Left colon (tissue), 2 donors: ENCODE measurements at regions of chr22 and their contacts with region 1.

Region 1: GRCh38 chr22:24170248-24170630 is 11.0 kb upstream of the SUSD2 start:
- DNase-seq: no peak
- ATAC-seq: peak; percentile 10

Region 2: DNA sequence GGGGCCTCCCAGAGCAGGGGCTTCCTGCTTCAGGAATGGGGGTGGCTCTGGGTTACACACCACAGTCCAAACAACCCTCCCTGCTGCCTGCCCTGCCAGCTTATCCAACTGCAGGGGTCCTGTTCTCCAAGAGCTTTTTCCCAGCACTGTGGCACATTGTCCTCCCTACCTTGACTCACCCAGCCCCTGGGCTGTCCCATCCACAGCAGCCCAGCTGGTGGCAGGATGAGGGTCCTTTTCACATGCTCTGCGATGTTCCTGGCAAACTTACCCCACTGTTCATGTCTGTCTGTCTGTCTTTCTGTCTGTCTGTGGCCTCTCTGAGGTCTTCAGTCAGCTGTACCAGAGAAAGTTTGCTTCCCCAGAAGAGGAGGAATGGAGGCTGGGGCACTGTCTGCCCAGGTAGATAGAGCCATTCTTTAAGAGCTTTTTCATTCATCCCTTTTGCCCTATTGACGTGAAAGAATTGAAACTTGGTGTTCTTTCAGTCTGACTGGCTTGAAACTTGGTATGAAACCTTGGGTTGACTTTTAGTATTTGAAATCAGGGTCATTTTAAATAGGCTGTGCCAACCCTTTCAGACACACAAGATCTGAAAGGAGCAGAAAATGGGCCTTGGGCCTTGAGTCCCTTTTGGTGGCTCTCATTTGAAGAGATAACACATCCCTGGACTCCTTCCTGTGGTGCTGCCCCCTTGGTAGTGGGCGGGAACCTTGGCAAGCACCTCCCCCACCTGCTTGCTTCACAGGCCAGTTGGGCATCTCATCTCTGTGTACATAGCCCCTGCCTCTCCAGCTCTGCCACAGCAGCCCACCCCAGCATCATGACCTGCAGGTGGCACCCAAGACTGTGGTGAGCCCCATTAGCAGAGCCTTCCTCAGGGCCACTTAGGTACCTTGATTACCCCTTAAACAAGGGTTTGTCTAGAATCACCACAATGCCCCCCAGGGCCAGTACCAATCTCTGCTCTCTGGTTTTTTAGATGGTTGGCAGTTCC is 63.6 kb before region 1 on chr22:
- intact Hi-C with region 1: loop called in 1 of 2 experiments (anchors 5 kb)
- DNase-seq: peak in 1 of 2 donors; percentile 30
- ATAC-seq: no peak

Region 3: GRCh38 chr22:24244101-24244787 is 74.0 kb after region 1 on chr22:
- intact Hi-C with region 1: no loop called
- DNase-seq: peak in 1 of 2 donors; percentile 23
- ATAC-seq: no peak

Region 4: DNA sequence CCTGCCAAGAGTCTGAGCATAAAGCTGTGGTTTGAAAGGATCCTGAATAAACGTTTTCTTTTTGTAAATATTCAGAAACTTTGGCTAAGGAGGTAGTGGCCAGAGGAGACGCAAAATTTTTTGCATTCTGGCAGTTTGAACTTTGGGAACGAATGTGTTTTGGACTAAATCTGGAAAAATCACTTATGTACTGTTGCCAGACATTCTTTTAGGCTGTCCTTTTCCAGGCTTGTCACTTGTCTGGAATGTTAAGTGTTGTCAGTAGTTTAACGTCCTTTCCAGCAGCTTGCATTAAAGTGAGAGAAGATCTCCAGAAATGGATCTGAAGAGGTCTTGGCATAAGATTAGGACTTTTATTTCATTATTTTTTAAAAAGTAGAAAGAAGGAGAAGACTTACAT is 118.9 kb after region 1 on chr22:
- intact Hi-C with region 1: no loop called
- DNase-seq: no peak
- ATAC-seq: no peak